A673 (cell line): ENCODE measurements at regions of chr18 and their contacts with region 1.

Region 1: GRCh38 chr18:1147730-1148129 is 243.1 kb downstream of the ADCYAP1 start:
- DNase-seq: no peak
- H3K4me3 ChIP-seq: no peak overlapping the region
- H3K27ac ChIP-seq: no peak overlapping the region
- H3K4me1 ChIP-seq: no peaks in the 10 kb centered on the region
- H3K27me3 ChIP-seq: no peaks in the 10 kb centered on the region
- CTCF ChIP-seq: no peak

Region 2: DNA sequence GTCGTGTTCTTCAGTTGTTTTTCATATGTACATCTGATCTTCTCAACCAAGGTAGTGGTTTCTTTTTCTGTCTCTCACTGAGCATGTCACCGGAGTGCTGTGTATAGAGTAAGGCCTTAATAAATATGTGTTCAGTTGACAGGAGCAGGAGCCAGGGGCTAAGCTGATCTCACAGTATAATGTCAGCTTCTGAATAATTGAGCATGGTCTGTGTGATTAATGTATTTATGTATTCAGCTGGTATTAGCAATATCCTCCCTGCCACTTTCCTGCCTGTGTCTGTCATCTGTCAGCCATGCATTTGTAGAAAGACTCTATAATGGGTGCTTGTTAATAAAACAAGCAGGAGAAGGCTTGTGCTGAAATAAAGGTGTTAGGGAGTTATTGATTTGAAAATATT is 44.2 kb before region 1 on chr18:
- CTCF ChIA-PET with region 1: no interaction called
- POLR2A ChIA-PET with region 1: no interaction called
- intact Hi-C with region 1: loop called (anchors 1 kb)
- DNase-seq: no peak
- H3K4me3 ChIP-seq: no peak overlapping the region
- H3K27ac ChIP-seq: no peak overlapping the region
- H3K4me1 ChIP-seq: no peaks in the 10 kb centered on the region
- H3K27me3 ChIP-seq: peaks cover 10% of the 10 kb centered on the region
- CTCF ChIP-seq: no peak

Region 3: GRCh38 chr18:1797235-1797634 is 649.5 kb after region 1 on chr18:
- CTCF ChIA-PET with region 1: no interaction called
- POLR2A ChIA-PET with region 1: no interaction called
- intact Hi-C with region 1: no loop called
- DNase-seq: no peak
- H3K4me3 ChIP-seq: no peak overlapping the region
- H3K27ac ChIP-seq: no peak overlapping the region
- H3K4me1 ChIP-seq: no peaks in the 10 kb centered on the region
- H3K27me3 ChIP-seq: peaks cover 4% of the 10 kb centered on the region
- CTCF ChIP-seq: no peak

Region 4: GRCh38 chr18:2312440-2312839 is 1164.7 kb after region 1 on chr18:
- CTCF ChIA-PET with region 1: no interaction called
- POLR2A ChIA-PET with region 1: no interaction called
- intact Hi-C with region 1: no loop called
- DNase-seq: no peak
- H3K4me3 ChIP-seq: no peak overlapping the region
- H3K27ac ChIP-seq: no peak overlapping the region
- H3K4me1 ChIP-seq: no peaks in the 10 kb centered on the region
- H3K27me3 ChIP-seq: peaks cover 58% of the 10 kb centered on the region
- CTCF ChIP-seq: no peak